HEK293 (cell line): ENCODE measurements at regions of chr3 and their contacts with region 1.

Region 1: DNA sequence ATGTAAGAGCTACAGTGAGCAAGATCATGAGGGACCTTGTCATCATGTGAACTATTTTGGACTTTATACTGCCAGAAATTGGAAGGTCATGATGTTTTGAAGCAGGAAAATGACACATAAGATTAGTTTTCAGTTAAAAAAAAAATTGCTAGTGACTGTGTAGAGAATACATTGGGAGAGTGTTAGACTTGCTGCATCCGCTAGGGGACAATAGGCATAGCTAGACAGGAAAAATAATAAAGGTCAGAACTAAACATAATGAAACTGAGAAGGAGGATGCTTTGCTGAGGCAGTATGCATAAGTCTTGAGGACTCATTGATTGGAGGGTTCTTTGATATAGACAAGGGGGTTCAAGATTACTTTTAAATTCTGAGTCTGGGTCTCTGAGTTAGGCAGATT is 275.8 kb upstream of the KCNH8 start:
- H3K4me3 ChIP-seq: no peak overlapping the region
- H3K27ac ChIP-seq: no peak overlapping the region
- H3K4me1 ChIP-seq: no peaks in the 10 kb centered on the region
- CTCF ChIP-seq: no peak

Region 2: DNA sequence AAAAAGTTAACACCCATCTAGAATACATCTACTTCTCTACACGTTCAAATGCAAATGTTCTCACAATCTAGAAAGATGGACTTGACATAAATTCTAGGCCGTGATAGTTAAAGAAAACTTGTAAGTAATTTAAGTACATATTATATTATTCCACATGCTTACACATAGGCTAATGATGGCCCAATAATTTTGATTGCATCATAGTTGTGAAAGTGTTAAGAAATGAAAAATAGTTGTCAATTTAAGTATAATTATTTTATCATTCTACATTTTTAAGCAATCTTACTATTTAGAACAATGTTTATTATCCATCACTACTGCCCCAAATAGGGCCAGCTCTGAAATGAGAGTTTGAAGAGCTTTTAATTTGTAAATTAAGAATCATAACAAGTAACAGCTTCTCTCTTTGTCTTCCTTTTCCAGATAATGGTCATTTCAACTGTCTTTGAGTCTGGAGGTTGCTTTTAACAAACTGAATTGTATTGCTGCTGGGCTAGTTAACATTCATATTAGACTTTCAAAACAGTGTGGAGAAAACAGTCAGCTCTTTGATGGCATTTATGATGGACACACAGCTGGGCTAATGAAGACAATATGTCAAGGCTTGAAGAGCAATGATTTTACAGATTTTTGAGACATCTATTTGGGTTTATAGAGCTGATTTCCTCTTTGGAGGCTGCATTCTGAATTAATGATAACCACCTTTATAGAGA is 29.8 kb after region 1 on chr3:
- CTCF ChIA-PET with region 1: no interaction called
- POLR2A ChIA-PET with region 1: no interaction called
- H3K4me3 ChIP-seq: no peak overlapping the region
- H3K27ac ChIP-seq: no peak overlapping the region
- H3K4me1 ChIP-seq: no peaks in the 10 kb centered on the region
- CTCF ChIP-seq: no peak

Region 3: DNA sequence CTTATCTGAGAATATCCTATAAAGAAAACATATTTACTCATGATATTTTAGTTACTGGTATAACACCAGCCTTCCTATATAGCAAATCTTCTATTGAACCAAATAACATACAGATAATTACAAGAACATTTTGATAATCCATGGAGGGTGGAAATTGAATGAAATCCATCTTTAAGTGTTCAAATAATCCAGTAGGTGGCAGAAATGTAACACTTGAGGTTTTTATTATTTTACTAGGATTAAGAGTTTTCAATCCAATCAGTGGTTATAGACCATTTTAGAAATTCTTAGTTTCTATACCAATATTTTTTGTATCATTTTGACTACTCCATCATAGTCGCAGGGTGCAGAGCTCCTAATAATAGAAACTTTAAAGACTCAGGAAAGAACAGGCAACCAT is 174.0 kb after region 1 on chr3:
- CTCF ChIA-PET with region 1: interaction called, 11 read pairs
- POLR2A ChIA-PET with region 1: no interaction called
- H3K4me3 ChIP-seq: no peak overlapping the region
- H3K27ac ChIP-seq: no peak overlapping the region
- H3K4me1 ChIP-seq: no peaks in the 10 kb centered on the region
- CTCF ChIP-seq: no peak